Endothelial cell of umbilical vein (primary cell): ENCODE measurements at regions of chr20 and their contacts with region 1.

Region 1: DNA sequence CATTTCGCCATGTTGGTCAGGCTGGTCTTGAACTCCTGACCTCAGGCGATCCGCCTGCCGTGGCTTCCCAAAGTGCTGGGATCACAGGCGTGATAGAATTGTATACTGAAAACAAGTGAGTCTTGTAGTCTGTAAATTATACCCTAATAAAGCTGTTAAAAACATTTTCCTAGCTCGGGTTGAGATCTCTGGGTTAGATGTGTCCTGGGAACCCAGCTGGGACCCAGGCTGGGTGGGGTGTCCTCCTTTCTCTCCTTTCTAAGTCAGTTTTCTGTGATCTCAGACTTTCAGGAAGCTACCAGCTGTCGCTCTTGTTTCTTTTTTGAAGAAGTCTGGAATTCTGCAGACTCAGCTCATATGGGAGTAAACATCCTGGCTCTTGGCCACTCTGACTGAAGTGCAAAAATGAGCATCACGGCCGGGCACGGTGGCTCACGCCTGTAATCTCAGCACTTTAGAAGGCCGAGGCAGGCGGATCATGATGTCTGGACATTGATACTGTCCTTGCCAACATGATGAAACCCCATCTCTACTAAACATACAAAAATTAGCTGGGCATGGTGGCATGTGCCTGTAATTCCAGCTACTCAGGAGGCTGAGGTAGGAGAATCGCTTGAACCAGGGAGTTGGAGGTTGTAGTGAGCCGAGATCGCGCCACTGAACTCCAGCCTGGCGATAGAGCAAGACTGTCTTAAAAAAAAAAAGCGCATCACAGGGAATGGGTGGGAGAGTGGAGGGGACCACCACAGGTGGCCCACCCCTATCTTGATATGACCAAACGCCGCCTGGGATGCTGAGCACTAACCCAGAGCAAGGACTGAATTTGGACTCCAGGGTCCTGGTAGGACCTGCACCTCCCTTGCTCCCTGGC is 9.9 kb upstream of the PCIF1 start:
- DNase-seq: peak; percentile 73
- H3K4me3 ChIP-seq: peak overlapping the region in 1 of 3 experiments; percentile 2
- H3K27ac ChIP-seq: no peak overlapping the region
- H3K4me1 ChIP-seq: peaks cover 14% of the 10 kb centered on the region
- H3K27me3 ChIP-seq: no peaks in the 10 kb centered on the region
- CTCF ChIP-seq: no peak
- POLR2A ChIP-seq: no peak

Region 2: DNA sequence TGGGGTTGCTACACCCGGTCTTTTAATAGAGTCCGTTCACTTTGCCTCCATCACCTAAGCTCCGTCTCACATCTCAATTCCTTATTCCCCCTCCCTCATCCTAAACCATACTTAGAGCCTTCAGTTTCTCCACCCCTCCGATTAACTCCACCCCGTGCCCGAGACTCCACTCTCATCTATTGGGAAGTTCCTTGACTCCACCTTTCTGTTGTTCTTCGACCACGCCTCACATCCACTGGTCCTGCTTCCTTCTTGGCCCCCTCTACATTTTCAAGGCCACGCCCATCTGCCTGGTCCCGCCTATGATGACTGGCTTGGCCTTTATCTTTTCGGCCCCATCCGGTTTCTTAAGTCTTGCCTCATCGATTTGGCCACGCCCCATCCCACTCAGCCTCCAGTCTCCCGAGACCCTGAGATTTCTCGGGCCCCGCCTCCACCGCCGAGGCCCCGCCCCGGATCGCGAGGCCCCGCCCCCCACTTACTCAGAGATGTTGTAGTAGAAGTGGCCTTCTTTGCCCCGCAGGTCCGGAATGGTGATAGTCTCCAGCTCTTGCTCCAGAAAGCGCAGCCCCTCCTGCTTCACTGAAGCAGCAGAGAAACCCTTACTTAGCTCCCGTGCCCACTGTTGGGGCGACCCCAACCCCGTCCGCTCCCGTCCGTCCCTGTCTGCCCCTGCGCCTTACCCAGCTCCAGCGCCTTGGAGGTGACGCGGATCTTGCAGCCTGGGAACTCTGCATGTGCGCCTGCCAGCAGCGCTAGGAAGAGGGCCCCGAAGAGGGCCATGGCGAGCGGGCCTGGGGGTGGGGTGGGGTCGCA is 13.7 kb before region 1 on chr20:
- CTCF ChIA-PET with region 1: interaction called, 9 read pairs
- POLR2A ChIA-PET with region 1: interaction called, 4 read pairs
- dilution Hi-C with region 1: no loop called
- intact Hi-C with region 1: loop called (anchors 1 kb)
- DNase-seq: peak; percentile 100
- H3K4me3 ChIP-seq: peak overlapping the region; percentile 6 to 62 (median 37)
- H3K27ac ChIP-seq: peak overlapping the region; percentile 43
- H3K4me1 ChIP-seq: peaks cover 28% of the 10 kb centered on the region
- H3K27me3 ChIP-seq: no peaks in the 10 kb centered on the region
- CTCF ChIP-seq: no peak
- POLR2A ChIP-seq: peak; percentile 30